WTC11 (cell line): ENCODE measurements at regions of chr1 and their contacts with region 1.

Region 1: DNA sequence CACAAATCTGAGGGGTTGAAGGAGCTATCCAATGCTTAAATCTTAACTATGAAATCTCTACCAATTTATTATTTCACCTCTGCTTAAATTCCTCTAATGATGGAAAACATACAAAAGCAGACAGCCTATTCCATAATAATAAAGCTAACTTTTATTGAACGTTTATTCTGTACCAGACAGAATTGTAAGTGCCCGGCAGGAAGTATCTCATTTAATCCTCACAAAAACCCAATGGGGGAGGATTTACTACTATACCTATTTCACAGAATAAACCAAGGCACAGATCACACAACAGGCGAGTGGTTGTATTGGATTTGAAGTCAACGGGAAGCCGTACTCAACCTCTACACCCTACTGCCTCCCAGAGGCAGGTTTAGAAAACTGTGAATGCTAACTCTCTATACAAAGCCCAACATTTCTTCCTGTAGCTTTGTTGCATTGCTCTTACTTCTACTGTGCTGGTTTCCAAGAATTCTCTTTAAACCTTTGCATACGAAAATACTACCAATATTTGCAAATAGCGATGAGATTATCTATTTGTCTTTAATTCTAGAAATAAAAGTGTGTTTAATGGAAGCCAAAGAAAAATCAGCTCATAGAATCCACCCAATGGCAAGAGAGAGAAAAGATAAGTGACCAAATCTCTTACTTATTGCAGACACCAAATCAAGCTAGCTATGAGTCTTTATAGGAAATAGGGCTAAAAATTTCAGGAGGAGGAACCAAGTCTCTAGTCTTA is 33.5 kb upstream of the C1orf53 start:
- DNase-seq: peak; percentile 27
- ATAC-seq: peak; percentile 100
- H3K4me3 Mint-ChIP-seq: no peak overlapping the region
- H3K27ac Mint-ChIP-seq: no peak overlapping the region
- H3K4me1 Mint-ChIP-seq: peaks cover 20% of the 10 kb centered on the region
- H3K27me3 Mint-ChIP-seq: no peaks in the 10 kb centered on the region; the same call in 1 of the 2 replicates
- CTCF ChIP-seq: 0 out of 2 replicates have a peak, but pooled peaks have one; percentile 26

Region 2: DNA sequence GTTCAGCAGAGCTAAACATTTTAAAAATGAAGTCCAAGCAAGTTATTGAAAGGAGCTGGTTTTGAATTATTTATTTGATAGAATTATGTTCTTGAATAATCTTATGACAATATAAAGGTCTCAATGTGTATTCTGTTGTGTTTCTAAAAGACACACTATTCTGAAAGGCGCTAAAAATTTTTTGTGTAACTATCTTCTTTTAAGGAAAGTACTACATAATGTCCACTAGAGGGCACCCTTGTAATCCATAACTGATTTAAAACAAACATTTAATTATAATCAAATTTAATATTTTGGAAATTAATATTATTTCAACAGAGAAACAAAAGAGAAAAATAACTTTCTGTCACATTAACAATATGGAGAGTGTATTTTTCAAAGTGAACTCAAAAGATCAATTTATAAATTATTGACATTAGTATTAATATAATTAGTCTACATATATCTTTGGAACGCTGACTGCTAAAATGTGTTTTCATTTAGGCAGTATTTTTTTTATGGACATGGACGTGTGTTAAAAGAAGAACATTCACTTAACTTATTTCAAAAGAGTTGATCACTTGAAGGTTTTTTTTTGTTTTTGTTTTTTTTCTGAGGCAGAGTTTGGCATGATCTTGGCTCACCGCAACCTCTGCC is 342.1 kb before region 1 on chr1:
- CTCF ChIA-PET with region 1: interaction called, 10 read pairs
- POLR2A ChIA-PET with region 1: no interaction called
- DNase-seq: no peak
- ATAC-seq: no peak
- H3K4me3 Mint-ChIP-seq: no peak overlapping the region
- H3K27ac Mint-ChIP-seq: no peak overlapping the region
- H3K4me1 Mint-ChIP-seq: peaks cover 10% of the 10 kb centered on the region
- H3K27me3 Mint-ChIP-seq: no peaks in the 10 kb centered on the region
- CTCF ChIP-seq: peak; percentile 48

Region 3: DNA sequence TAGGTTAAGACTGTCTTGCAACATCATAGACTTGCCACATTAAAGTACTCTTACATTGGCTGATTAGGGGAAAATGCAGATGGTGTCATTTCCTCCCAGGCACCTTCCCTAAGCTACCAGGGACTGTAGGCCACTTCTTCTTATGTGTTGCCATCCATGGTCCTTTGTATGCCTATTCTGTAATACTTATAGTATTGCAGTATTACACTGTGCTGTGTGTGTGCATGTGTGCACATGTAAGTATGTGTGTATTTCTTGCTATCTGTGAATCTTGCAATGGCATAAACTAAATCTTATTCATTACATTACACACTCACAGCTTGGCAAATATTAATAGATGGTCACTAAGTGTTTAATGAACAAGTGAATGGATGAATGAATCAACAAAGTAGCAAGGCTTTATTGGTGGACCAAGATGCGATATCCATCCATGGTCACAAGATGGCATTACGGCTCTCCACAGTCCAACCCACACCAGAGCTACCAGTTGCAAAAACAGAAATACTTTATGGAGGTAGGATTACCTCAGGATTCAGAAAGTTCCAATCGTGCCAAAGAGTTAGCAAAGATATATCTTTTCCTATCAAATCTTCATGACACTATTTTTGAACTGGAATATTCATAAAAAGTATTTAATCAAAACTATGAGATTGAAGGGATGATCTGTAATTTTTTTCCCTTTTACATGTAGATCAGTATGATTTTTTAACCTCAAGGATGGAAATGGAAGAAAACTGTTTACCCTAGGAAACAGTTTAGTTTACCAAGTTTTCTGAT is 253.8 kb before region 1 on chr1:
- CTCF ChIA-PET with region 1: interaction called, 21 read pairs
- POLR2A ChIA-PET with region 1: no interaction called
- DNase-seq: peak; percentile 39
- ATAC-seq: peak; percentile 97
- H3K4me3 Mint-ChIP-seq: no peak overlapping the region
- H3K27ac Mint-ChIP-seq: no peak overlapping the region
- H3K4me1 Mint-ChIP-seq: peaks cover 9% of the 10 kb centered on the region
- H3K27me3 Mint-ChIP-seq: no peaks in the 10 kb centered on the region
- CTCF ChIP-seq: peak; percentile 44

Region 4: DNA sequence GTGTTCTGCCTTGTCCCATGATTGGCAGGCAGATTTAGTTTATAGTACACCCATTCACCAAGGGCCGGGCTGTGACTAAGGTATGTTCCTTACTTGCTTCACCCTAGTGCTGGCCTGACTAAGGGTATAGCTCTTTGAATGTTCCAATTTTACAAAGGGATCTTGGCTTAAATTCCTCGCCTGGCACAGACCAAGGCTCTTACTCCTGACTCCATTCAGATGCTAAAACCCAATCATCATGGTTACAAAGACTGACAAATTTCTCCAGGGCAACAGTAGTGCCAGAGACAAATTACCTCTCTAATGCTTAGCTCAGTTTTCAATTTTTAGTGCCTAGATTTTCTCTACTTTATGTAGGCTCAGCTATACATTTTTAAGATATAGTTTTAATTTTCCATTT is 22.0 kb after region 1 on chr1:
- CTCF ChIA-PET with region 1: interaction called, 14 read pairs
- POLR2A ChIA-PET with region 1: no interaction called
- DNase-seq: no peak
- ATAC-seq: peak; percentile 98
- H3K4me3 Mint-ChIP-seq: no peak overlapping the region
- H3K27ac Mint-ChIP-seq: no peak overlapping the region
- H3K4me1 Mint-ChIP-seq: peaks cover 23% of the 10 kb centered on the region
- H3K27me3 Mint-ChIP-seq: no peaks in the 10 kb centered on the region
- CTCF ChIP-seq: no peak

Region 5: GRCh38 chr1:197915862-197916499 is 47.1 kb after region 1 on chr1:
- CTCF ChIA-PET with region 1: interaction called, 11 read pairs
- POLR2A ChIA-PET with region 1: no interaction called
- DNase-seq: peak; percentile 90
- ATAC-seq: peak; percentile 42
- H3K4me3 Mint-ChIP-seq: peak overlapping the region; percentile 82
- H3K27ac Mint-ChIP-seq: no peak overlapping the region
- H3K4me1 Mint-ChIP-seq: peaks cover 96% of the 10 kb centered on the region
- H3K27me3 Mint-ChIP-seq: peaks cover 100% of the 10 kb centered on the region
- CTCF ChIP-seq: peak; percentile 49; the same call in 1 of the 2 replicates

Region 6: GRCh38 chr1:198007687-198008607 is 139.0 kb after region 1 on chr1:
- CTCF ChIA-PET with region 1: no interaction called
- POLR2A ChIA-PET with region 1: no interaction called
- DNase-seq: no peak
- ATAC-seq: no peak
- H3K4me3 Mint-ChIP-seq: no peak overlapping the region
- H3K27ac Mint-ChIP-seq: no peak overlapping the region
- H3K4me1 Mint-ChIP-seq: peaks cover 6% of the 10 kb centered on the region
- H3K27me3 Mint-ChIP-seq: no peaks in the 10 kb centered on the region
- CTCF ChIP-seq: no peak